ENCODE measurements at regions of chr10 and their contacts with region 1.

Region 1: DNA sequence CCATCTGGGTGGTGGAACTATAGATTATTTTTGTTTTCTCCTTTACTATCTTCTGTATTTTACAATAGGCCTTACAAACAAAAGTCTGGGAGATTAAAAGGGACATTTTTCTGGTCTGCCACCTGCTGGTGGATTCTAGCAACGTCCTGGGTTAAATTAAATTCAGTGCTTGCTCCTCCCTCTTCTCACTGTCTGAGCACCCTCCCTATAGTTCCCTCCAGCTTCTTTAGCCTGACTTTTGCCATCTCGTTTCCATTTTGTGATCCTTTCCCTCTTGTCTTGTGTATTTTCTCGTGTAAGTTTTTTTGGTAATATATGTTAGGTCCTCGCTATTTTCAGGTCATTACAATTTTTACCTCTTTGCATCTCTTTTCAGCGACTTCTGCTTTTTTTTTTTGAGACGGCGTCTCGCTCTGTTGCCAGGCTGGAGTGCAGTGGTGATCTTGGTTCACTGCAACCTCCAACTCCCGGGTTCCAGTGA is 16.1 kb downstream of the ANKRD16 start:
- DNase-seq: peak; percentile 77
- H3K4me3 Mint-ChIP-seq: no peak overlapping the region
- H3K27ac Mint-ChIP-seq: no peak overlapping the region
- H3K4me1 Mint-ChIP-seq: no peaks in the 10 kb centered on the region
- H3K27me3 Mint-ChIP-seq: no peaks in the 10 kb centered on the region
- CTCF ChIP-seq: peak; percentile 46

Region 2: GRCh38 chr10:5862360-5862961 is 11.1 kb before region 1 on chr10:
- CTCF ChIA-PET with region 1: interaction called, 43 read pairs
- POLR2A ChIA-PET with region 1: interaction called, 3 read pairs
- intact Hi-C with region 1: no loop called
- DNase-seq: no peak
- H3K4me3 Mint-ChIP-seq: no peak overlapping the region
- H3K27ac Mint-ChIP-seq: no peak overlapping the region
- H3K4me1 Mint-ChIP-seq: peaks cover 6% of the 10 kb centered on the region
- H3K27me3 Mint-ChIP-seq: no peaks in the 10 kb centered on the region
- CTCF ChIP-seq: no peak

Region 3: GRCh38 chr10:5904227-5904626 is 30.7 kb after region 1 on chr10:
- CTCF ChIA-PET with region 1: no interaction called
- POLR2A ChIA-PET with region 1: no interaction called
- intact Hi-C with region 1: no loop called
- DNase-seq: no peak
- H3K4me3 Mint-ChIP-seq: no peak overlapping the region
- H3K27ac Mint-ChIP-seq: no peak overlapping the region
- H3K4me1 Mint-ChIP-seq: peaks cover 5% of the 10 kb centered on the region
- H3K27me3 Mint-ChIP-seq: no peaks in the 10 kb centered on the region
- CTCF ChIP-seq: no peak

Region 4: DNA sequence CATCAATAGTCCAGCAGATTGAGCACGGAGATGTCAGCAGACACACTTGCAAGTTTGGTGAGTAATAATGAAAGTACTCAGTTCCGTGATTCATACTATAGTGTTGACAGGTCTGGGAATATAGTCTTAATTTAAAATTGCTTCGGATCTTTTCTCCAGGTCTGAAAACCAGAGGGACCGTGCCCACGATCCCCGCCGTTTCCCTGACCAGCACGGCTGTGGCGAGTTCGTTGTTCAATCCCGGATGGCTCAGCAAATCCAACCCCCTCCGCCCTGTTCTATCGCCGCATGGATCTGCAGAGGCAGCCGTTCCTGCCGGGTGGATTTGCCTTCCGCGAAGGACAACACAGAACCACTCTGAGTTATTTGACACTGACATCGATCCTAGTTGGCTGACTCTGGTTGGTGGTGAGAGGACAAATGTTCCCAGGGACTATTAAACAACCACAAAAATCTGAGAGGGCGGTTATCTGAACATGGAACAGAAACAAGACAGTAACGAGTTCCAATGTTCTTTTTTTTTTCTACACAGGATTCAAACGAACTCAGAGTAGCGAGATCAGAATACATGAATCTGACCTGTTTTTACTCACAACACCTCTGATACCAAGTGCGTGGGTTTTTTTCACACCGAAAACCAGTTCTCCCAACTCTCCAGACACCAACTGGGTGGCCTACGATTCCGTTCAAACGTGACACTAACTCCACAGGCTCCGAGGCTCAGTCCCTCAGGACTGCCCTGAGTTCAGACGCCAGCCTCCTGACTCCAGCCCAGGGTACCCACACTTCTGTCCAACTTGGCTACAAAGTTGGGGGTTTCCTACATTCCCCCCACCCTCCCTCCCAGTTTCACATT is 268.0 kb after region 1 on chr10:
- CTCF ChIA-PET with region 1: no interaction called
- POLR2A ChIA-PET with region 1: no interaction called
- intact Hi-C with region 1: no loop called
- DNase-seq: peak; percentile 42
- H3K4me3 Mint-ChIP-seq: peak overlapping the region; percentile 81
- H3K27ac Mint-ChIP-seq: peak overlapping the region; percentile 16
- H3K4me1 Mint-ChIP-seq: peaks cover 23% of the 10 kb centered on the region
- H3K27me3 Mint-ChIP-seq: peaks cover 12% of the 10 kb centered on the region
- CTCF ChIP-seq: no peak